HEK293 (cell line): ENCODE measurements at regions of chr19 and their contacts with region 1.

Region 1: GRCh38 chr19:32971715-32972540 is at the starts of genes CEP89 and FAAP24:
- H3K4me3 ChIP-seq: peak within 1 kb of the TSS; percentile 64
- H3K27ac ChIP-seq: peak within 1 kb of the TSS; percentile 83
- H3K4me1 ChIP-seq: peaks cover 14% of the 10 kb centered on the region
- CTCF ChIP-seq: peak; percentile 56; the same call in 1 of the 2 replicates

Region 2: GRCh38 chr19:32674959-32675719 is 296.8 kb before region 1 on chr19 and contains the start of gene ANKRD27:
- CTCF ChIA-PET with region 1: interaction called, 4 read pairs
- POLR2A ChIA-PET with region 1: interaction called, 13 read pairs
- H3K4me3 ChIP-seq: peak within 1 kb of the TSS; percentile 75
- H3K27ac ChIP-seq: peak within 1 kb of the TSS; percentile 82
- H3K4me1 ChIP-seq: peaks cover 26% of the 10 kb centered on the region
- CTCF ChIP-seq: no peak

Region 3: DNA sequence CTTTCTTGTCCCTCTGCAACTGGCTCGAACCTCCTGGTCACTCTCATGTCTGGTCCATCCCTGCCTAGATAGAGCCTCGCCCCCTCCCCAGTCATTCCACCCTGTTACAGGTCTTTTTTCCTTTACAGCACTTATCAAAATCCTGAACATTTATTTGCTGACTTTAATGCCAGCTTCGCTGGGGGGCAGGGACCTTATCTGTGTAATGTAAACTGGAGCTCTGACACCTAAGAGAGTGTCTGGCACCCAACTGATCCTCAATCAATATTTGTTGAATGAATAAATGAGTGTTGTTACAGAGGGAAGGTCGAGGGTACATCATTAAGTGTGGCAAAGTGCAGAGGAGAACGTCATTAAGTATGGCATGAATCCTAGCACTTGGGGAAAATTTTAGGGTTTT is 16.8 kb after region 1 on chr19:
- CTCF ChIA-PET with region 1: interaction called, 15 read pairs
- POLR2A ChIA-PET with region 1: no interaction called
- H3K4me3 ChIP-seq: no peak overlapping the region
- H3K27ac ChIP-seq: no peak overlapping the region
- H3K4me1 ChIP-seq: no peaks in the 10 kb centered on the region
- CTCF ChIP-seq: no peak

Region 4: GRCh38 chr19:33104520-33104919 is 132.6 kb after region 1 on chr19:
- CTCF ChIA-PET with region 1: interaction called, 45 read pairs
- POLR2A ChIA-PET with region 1: no interaction called
- H3K4me3 ChIP-seq: no peak overlapping the region
- H3K27ac ChIP-seq: no peak overlapping the region
- H3K4me1 ChIP-seq: no peaks in the 10 kb centered on the region
- CTCF ChIP-seq: no peak

Region 5: GRCh38 chr19:33125929-33126388 is 154.0 kb after region 1 on chr19:
- CTCF ChIA-PET with region 1: interaction called, 335 read pairs
- POLR2A ChIA-PET with region 1: no interaction called
- H3K4me3 ChIP-seq: no peak overlapping the region
- H3K27ac ChIP-seq: 0 out of 2 replicates have a peak overlapping the region, but pooled peaks have one; percentile 11
- H3K4me1 ChIP-seq: peaks cover 4% of the 10 kb centered on the region
- CTCF ChIP-seq: peak; percentile 86

Region 6: GRCh38 chr19:33186431-33187182 is 214.7 kb after region 1 on chr19:
- CTCF ChIA-PET with region 1: interaction called, 33 read pairs
- POLR2A ChIA-PET with region 1: no interaction called
- H3K4me3 ChIP-seq: no peak overlapping the region
- H3K27ac ChIP-seq: no peak overlapping the region
- H3K4me1 ChIP-seq: peaks cover 5% of the 10 kb centered on the region; the same call in 1 of the 2 replicates
- CTCF ChIP-seq: no peak